Ascending aorta (tissue), 2 donors: ENCODE measurements at regions of chr11 and their contacts with region 1.

Region 1: GRCh38 chr11:67428052-67428914 is at the start of gene RPS6KB2:
- DNase-seq: peak; percentile 96 to 99
- H3K4me3 ChIP-seq: peak within 1 kb of the TSS; percentile 75 to 94
- H3K27ac ChIP-seq: peak within 1 kb of the TSS; percentile 86 to 91
- H3K4me1 ChIP-seq: peaks cover 6 to 16% of the 10 kb centered on the region in 2 donors
- H3K27me3 ChIP-seq: no peaks in the 10 kb centered on the region
- CTCF ChIP-seq: no peak
- total RNA-seq, gene RPS6KB2: 72.3 TPM

Region 2: DNA sequence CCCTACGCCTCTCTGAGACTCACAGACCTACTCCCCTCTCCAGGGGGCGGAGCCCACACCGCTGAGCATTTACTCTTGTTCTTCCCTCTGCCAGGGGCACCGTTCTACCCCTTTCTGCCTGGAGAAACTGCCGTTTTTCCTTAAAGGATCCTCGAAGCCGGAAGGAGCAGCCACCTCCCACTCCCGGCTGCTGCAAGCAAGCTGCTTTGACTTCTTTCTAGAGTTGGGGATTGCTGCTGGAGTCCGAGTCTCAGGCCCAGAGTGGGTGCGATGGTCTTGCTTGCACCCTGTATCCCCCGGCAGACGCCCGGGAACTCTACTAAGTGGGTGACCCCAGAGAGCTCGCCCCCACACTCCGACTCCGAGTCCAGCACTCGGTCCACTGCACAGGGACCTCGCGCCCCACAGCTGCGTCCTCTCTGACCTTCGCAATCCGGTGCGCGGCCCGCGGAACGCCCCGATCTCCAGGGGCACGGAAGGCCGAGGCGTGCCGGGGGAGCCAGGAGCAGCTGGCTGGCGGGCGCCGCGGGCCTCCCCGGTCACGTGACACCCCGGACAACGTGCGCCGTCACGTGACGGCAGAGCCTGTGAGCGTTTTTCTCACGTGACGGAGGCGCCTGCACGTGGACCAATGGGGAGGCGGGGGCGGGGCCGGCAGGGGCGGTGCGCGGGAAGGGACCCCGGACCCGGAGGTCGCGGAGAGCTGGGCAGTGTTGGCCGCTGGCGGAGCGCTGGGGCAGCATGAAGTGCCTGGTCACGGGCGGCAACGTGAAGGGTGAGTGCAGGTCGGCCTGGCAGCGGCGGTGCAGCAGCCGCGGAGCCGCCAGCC is 36.8 kb before region 1 on chr11 and contains the start of gene RAD9A:
- intact Hi-C with region 1: loop called (anchors 5 kb)
- DNase-seq: peak; percentile 89 to 98
- H3K4me3 ChIP-seq: peak within 1 kb of the TSS; percentile 72 to 84
- H3K27ac ChIP-seq: peak within 1 kb of the TSS; percentile 59 to 62
- H3K4me1 ChIP-seq: peaks cover 7 to 15% of the 10 kb centered on the region in 2 donors
- H3K27me3 ChIP-seq: no peaks in the 10 kb centered on the region
- CTCF ChIP-seq: no peak
- total RNA-seq, gene RAD9A: 22.6 TPM

Region 3: DNA sequence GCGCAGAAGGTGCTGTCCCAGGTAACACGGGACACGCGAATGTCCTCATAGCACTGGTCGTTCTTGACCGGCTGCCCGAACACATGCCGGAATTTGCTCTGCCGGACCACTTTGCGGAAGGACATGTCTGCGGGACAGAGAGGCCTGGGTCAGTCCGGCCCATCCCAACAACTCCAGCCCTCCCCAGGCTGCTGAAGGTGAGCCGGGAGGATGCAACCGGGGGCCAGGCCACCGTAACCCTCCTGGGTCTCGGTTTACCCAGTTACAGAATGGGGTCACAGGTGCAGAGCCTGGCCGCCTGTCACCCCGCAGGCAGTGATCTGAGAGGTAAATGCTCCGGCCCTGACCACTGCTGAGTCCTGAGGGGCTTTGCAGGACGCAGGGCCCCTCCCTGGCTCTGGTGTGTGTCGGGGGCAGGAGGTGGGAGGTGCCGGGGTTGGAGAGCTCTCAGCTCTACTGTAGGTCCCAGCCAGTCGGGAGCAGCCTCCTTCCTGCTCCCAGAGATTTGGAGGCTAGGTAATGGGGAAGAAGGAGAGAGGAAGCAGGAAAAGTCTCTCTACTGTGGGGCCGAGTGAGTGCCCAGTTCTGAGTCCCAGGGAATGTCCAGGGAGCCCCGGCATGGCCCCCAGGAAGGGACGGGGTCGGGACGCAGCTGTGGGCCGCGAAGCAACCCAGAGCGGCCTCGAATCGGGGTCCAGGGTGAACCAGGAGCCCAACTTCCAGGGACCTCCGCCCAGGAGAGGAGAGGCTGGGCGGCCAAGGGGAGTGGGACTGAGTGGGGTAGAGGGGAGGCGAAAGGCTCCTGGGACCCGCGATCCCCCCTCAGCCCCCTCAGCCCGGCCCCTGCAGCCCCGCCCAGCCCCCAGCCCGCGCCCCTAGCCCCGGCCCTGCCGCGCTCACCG is 14.5 kb after region 1 on chr11:
- intact Hi-C with region 1: loop called (anchors 1 kb)
- DNase-seq: no peak
- H3K4me3 ChIP-seq: peak overlapping the region; percentile 89 to 99
- H3K27ac ChIP-seq: peak overlapping the region; percentile 94 to 98
- H3K4me1 ChIP-seq: peaks cover 8 to 13% of the 10 kb centered on the region in 2 donors
- H3K27me3 ChIP-seq: no peaks in the 10 kb centered on the region
- CTCF ChIP-seq: no peak